ENCODE measurements at regions of chr12 and their contacts with region 1.

Region 1: DNA sequence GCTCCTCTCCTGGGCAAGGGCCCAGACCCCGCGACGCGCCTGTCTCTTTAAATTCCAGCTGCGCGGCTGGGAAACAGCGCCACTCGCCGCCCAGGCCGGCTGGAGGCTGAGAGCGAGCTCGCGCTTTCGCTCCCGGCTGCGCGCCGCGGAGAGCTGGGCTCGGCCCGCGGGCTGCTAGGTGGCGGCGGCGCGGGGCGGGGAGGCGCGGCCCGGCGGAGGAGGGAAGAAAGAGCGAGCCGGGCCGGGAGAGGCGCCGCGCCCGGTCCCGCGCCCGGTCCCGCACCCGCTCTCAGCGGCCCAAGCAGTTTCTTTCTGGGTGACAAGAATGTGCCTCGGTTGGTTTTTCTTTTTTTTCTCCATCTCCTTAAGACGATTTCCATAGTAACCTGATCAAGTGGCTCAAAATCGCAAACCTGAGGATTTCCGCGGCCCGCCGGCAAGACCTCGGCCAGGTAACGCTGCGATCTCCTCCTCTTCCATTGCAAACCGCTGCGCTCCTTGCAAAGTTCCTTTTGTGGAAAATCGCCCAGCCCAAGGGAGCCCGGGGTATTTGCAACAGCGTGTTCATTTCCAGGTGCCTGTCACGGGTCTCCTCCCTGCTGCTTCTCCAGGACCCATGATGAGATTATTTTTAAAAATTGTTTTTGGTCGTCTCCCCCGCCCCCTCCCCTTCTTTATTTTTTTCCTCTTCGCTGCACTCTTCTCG is 259.5 kb upstream of the E2F7 start:
- DNase-seq: peak; percentile 72 to 91
- ATAC-seq: peak; percentile 93
- H3K4me3 ChIP-seq: peak overlapping the region; percentile 76 to 87
- H3K27ac ChIP-seq: no peak overlapping the region
- H3K4me1 ChIP-seq: no peaks in the 10 kb centered on the region
- H3K27me3 ChIP-seq: no peaks in the 10 kb centered on the region

Region 2: DNA sequence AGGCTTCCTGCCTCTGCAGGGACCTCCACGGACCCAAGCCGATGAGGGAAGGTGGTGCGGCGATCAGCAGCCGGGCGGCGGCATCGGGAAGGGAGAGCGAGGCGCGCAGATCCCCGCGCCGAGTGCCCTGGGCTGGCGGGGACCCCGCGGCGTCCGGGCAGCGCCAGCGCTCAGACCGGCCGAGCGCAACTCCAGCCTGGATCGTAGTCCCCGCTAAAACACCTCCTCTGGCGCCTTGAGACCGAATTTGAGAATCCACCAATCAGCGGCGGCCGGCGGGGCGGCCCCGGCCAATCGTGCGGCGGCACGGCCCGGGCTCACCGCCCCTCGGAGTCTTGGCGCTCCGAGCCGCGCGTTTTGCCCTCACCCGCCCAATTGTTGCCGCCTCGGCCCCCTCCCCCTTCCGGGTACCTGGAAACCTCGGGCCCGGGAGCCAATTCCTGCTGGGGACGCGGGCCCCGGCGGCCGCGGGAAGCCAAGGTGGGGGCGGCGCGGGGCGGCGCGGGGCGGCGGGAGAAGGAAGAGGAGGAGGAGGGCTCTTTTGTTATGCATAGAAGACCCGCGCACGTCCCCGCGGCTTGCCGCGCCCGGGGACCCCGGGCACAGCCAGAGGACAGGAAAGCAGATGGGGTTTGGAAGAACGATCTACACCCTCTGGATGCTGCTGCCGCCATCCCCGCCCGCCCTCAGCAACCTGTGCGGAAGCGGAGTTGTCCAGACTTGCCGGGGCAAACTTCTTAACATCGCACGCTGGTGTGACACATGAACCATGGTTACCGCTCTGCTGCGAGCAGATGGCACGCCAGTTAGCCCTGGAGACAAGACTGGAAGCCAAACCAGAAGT is 259.3 kb before region 1 on chr12 and contains the start of gene E2F7:
- intact Hi-C with region 1: loop called in 1 of 2 experiments (anchors 10 kb)
- DNase-seq: peak; percentile 89 to 95
- ATAC-seq: peak; percentile 95
- H3K4me3 ChIP-seq: peak within 1 kb of the TSS; percentile 60 to 83
- H3K27ac ChIP-seq: no peak within 1 kb of the TSS
- H3K4me1 ChIP-seq: no peaks in the 10 kb centered on the region
- H3K27me3 ChIP-seq: no peaks in the 10 kb centered on the region
- total RNA-seq, gene E2F7: 0.30 to 0.36 TPM

Region 3: DNA sequence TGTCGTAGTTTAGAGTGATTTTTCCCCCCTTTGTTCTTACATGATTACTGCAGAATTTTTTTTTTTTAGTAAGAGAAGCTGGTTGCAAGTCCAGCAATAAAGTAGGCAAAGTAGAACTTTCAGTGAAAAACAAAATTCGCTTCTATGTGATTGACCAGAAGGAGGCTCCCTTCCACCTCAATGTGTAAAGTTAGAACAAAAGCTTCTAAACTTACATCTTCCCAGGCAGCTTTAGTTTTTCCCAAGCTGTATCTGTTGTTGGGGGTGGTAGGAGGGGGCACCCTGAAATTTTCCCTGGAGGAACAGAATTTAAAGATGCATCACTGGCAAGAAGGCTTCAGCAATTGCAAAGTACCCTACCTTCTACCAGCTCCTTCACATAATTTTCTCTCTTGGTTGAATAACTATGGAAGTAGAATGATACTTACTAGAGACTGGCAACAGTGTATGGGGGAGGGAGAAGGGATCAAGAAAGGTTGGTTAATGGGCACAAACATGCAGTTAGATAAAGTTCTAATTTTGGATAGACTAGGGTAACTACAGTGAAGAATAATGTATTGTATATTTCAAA is 172.2 kb before region 1 on chr12:
- intact Hi-C with region 1: no loop called
- DNase-seq: no peak
- ATAC-seq: no peak
- H3K4me3 ChIP-seq: no peak overlapping the region
- H3K27ac ChIP-seq: no peak overlapping the region
- H3K4me1 ChIP-seq: no peaks in the 10 kb centered on the region
- H3K27me3 ChIP-seq: no peaks in the 10 kb centered on the region

Region 4: DNA sequence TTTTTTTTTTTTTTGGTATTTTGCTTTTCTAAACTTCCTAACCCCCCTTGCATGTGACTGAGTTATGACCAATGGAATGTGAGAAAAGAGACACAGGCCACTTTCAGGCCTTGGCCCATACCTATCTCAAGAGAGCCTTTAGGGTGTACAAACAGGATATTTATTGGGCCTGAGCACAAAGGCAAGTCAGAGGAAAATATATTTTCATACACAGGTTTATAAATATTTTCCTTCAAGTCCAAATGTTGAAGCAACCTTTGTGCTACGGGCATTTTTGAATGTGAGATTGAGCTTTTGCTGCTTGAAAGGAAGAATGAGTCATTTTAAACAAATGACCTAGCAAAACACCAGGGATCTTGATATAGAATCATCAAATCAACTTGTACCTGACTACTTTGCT is 30.9 kb before region 1 on chr12:
- intact Hi-C with region 1: no loop called
- DNase-seq: no peak
- ATAC-seq: no peak
- H3K4me3 ChIP-seq: no peak overlapping the region
- H3K27ac ChIP-seq: no peak overlapping the region
- H3K4me1 ChIP-seq: no peaks in the 10 kb centered on the region
- H3K27me3 ChIP-seq: no peaks in the 10 kb centered on the region

Region 5: GRCh38 chr12:77308056-77308455 is 16.9 kb before region 1 on chr12:
- intact Hi-C with region 1: no loop called
- DNase-seq: no peak
- ATAC-seq: no peak
- H3K4me3 ChIP-seq: no peak overlapping the region
- H3K27ac ChIP-seq: no peak overlapping the region
- H3K4me1 ChIP-seq: no peaks in the 10 kb centered on the region
- H3K27me3 ChIP-seq: no peaks in the 10 kb centered on the region

Measured in aorta (tissue), 5 donors.